Activated naive CD4-positive, alpha-beta T cell treated with anti-CD3 and anti-CD28 coated beads for 36 hours (primary cell): ENCODE measurements at regions of chr11 and their contacts with region 1.

Region 1: DNA sequence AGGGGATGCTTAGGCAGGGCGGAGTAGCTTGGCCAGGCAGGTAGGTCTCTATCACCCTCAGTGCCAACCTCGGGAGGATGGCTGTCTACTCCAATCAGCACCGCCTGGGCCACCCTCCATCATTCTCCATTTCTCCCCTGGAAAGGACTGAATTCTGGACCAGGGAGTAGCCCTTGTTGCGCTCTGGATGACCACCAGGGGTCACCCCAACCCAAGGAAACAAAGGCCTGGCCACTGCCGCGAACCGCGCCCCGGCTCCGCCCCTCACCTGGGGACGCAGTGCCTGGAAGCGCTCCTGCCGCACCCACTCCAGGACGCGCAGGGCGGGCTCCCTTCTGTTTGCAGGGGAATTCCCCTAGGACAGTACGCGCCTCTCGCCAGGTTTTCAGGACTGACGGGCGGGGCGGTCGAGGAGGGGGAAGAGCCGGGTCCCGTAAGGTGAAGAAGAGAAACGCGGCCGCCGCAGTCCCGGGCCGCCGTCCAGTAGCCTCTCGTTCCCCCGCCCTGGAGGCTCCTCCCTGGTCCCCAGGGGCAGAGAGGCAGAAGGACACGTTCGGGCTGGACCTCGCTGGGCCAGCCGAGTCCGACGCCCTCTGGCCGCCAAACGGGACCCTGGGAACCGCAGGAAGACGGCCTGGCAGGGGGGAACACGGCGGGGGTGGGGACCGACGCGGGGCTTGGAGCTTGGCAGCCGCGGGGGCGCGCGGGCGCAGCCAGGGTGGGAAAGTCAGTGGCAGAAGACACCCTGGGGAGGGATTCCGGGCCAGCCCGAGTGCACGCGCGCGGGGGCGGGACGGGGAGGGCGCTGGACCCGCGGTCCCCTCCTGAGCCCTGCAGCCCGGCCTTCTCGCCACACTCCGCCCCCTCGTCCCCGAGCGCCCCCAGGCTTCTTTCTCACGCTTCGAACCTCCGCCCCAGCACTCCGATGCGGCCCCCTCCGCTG is 7.1 kb downstream of the SCN4B start:
- DNase-seq: peak; percentile 96
- H3K4me3 Mint-ChIP-seq: peak overlapping the region; percentile 77
- H3K27ac Mint-ChIP-seq: no peak overlapping the region
- H3K4me1 Mint-ChIP-seq: peaks cover 3% of the 10 kb centered on the region
- H3K27me3 Mint-ChIP-seq: peaks cover 40% of the 10 kb centered on the region

Region 2: GRCh38 chr11:118171269-118172062 is 25.9 kb after region 1 on chr11:
- CTCF ChIA-PET with region 1: interaction called, 105 read pairs
- intact Hi-C with region 1: loop called (anchors 1 kb)
- DNase-seq: peak; percentile 84
- H3K4me3 Mint-ChIP-seq: no peak overlapping the region
- H3K27ac Mint-ChIP-seq: no peak overlapping the region
- H3K4me1 Mint-ChIP-seq: peaks cover 2% of the 10 kb centered on the region
- H3K27me3 Mint-ChIP-seq: peaks cover 2% of the 10 kb centered on the region

Region 3: GRCh38 chr11:118295834-118296454 is 150.4 kb after region 1 on chr11:
- CTCF ChIA-PET with region 1: interaction called, 17 read pairs
- intact Hi-C with region 1: loop called (anchors 1 kb)
- DNase-seq: peak; percentile 76
- H3K4me3 Mint-ChIP-seq: no peak overlapping the region
- H3K27ac Mint-ChIP-seq: peak overlapping the region; percentile 8
- H3K4me1 Mint-ChIP-seq: peaks cover 15% of the 10 kb centered on the region
- H3K27me3 Mint-ChIP-seq: no peaks in the 10 kb centered on the region

Region 4: GRCh38 chr11:118401151-118401878 is 255.8 kb after region 1 on chr11 and contains the start of gene ATP5MG:
- CTCF ChIA-PET with region 1: interaction called, 4 read pairs
- intact Hi-C with region 1: loop called (anchors 1 kb)
- DNase-seq: peak; percentile 97
- H3K4me3 Mint-ChIP-seq: peak within 1 kb of the TSS; percentile 95
- H3K27ac Mint-ChIP-seq: peak within 1 kb of the TSS; percentile 98
- H3K4me1 Mint-ChIP-seq: peaks cover 58% of the 10 kb centered on the region
- H3K27me3 Mint-ChIP-seq: no peaks in the 10 kb centered on the region
- total RNA-seq, gene ATP5MG: 279 to 284 TPM

Region 5: GRCh38 chr11:118565051-118565450 is 419.5 kb after region 1 on chr11:
- CTCF ChIA-PET with region 1: interaction called, 6 read pairs
- intact Hi-C with region 1: loop called (anchors 1 kb)
- DNase-seq: no peak
- H3K4me3 Mint-ChIP-seq: peak overlapping the region; percentile 70
- H3K27ac Mint-ChIP-seq: no peak overlapping the region
- H3K4me1 Mint-ChIP-seq: peaks cover 24% of the 10 kb centered on the region
- H3K27me3 Mint-ChIP-seq: no peaks in the 10 kb centered on the region

Region 6: GRCh38 chr11:118659314-118659952 is 513.9 kb after region 1 on chr11:
- CTCF ChIA-PET with region 1: no interaction called
- intact Hi-C with region 1: loop called (anchors 1 kb)
- DNase-seq: peak; percentile 96
- H3K4me3 Mint-ChIP-seq: no peak overlapping the region
- H3K27ac Mint-ChIP-seq: no peak overlapping the region
- H3K4me1 Mint-ChIP-seq: peaks cover 5% of the 10 kb centered on the region
- H3K27me3 Mint-ChIP-seq: no peaks in the 10 kb centered on the region